Heart right ventricle (tissue), 16 donors: ENCODE measurements at regions of chr12 and their contacts with region 1.

Region 1: GRCh38 chr12:20212658-20213555 is 155.4 kb upstream of the PDE3A start:
- DNase-seq: peak; percentile 76 to 89
- ATAC-seq: peak; percentile 95 to 99 (median 98)
- H3K4me3 ChIP-seq: peak overlapping the region in 9 of 10 donors; percentile 0 to 37 (median 16)
- H3K27ac ChIP-seq: peak overlapping the region; percentile 53 to 86 (median 78)
- H3K4me1 ChIP-seq: peaks cover 5 to 48% (median 31%) of the 10 kb centered on the region in 9 donors
- H3K27me3 ChIP-seq: no peaks in the 10 kb centered on the region
- CTCF ChIP-seq: no peak

Region 2: GRCh38 chr12:19744734-19745218 is 468.1 kb before region 1 on chr12:
- intact Hi-C with region 1: loop called in 3 of 10 experiments (anchors 10 kb)
- DNase-seq: peak in 1 of 2 donors; percentile 43
- ATAC-seq: peak; percentile 73 to 93 (median 88)
- H3K4me3 ChIP-seq: no peak overlapping the region
- H3K27ac ChIP-seq: peak overlapping the region in 7 of 10 donors; percentile 31 to 61 (median 50)
- H3K4me1 ChIP-seq: peaks cover 0 to 38% (median 18%) of the 10 kb centered on the region in 9 donors
- H3K27me3 ChIP-seq: no peaks in the 10 kb centered on the region
- CTCF ChIP-seq: no peak

Region 3: GRCh38 chr12:20030826-20031225 is 182.1 kb before region 1 on chr12:
- intact Hi-C with region 1: loop called in 1 of 10 experiments (anchors 10 kb)
- DNase-seq: no peak
- ATAC-seq: no peak
- H3K4me3 ChIP-seq: no peak overlapping the region
- H3K27ac ChIP-seq: no peak overlapping the region
- H3K4me1 ChIP-seq: peaks cover 0 to 5% (median 0%) of the 10 kb centered on the region in 9 donors
- H3K27me3 ChIP-seq: no peaks in the 10 kb centered on the region
- CTCF ChIP-seq: no peak

Region 4: GRCh38 chr12:20142956-20143355 is 70.0 kb before region 1 on chr12:
- intact Hi-C with region 1: no loop called
- DNase-seq: no peak
- ATAC-seq: no peak
- H3K4me3 ChIP-seq: no peak overlapping the region
- H3K27ac ChIP-seq: no peak overlapping the region
- H3K4me1 ChIP-seq: no peaks in the 10 kb centered on the region
- H3K27me3 ChIP-seq: no peaks in the 10 kb centered on the region
- CTCF ChIP-seq: no peak

Region 5: DNA sequence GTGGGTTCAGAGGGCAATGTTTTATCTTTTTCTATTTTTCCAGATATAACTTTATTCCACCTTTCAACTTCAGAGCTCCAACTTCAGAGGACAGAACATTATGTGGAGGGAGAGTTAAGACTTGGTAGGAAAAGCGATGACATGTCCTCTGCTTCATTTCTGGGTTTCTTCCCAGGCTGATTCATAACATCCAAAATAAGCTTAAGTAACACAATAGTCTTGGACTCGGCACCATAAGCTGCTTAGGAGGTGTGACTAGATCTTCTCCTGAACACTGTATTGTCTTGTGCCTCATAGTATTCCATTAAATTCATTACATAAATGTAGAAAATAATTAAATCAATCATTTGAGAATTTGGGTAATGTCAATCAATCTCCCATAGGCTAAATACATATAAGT is 59.9 kb after region 1 on chr12:
- intact Hi-C with region 1: loop called in 2 of 10 experiments (anchors 5 kb)
- DNase-seq: no peak
- ATAC-seq: peak; percentile 59 to 87 (median 79)
- H3K4me3 ChIP-seq: no peak overlapping the region
- H3K27ac ChIP-seq: peak overlapping the region; percentile 45 to 79 (median 67)
- H3K4me1 ChIP-seq: peaks cover 0 to 50% (median 18%) of the 10 kb centered on the region in 9 donors
- H3K27me3 ChIP-seq: no peaks in the 10 kb centered on the region
- CTCF ChIP-seq: no peak

Region 6: DNA sequence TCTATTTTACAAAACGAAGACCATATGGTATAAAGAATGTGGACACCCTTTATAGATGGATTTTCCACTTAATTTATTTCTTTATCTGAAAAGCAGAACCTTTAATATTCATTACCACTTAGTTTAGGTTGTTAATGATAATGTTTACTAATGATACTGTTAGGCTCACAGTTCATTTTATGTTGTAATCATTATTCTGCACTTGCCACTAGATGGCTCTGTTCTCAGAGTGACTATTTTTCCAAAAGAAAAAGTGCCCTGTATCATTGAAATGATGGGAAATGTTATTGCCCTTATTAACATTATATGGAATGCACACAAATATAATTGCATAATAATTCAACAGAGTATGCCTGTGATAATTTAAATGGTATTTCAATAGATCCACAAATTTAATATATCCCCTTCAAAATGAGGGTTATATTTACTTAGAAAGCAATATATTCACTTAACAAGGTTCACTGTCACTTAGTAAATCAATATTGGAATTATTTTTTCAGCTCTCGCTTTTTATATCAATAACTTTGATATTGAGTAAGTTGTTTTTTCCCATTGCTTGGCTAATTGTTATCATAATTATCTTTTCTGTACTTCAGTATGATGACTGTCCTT is 251.1 kb after region 1 on chr12:
- intact Hi-C with region 1: loop called in 1 of 10 experiments (anchors 10 kb)
- DNase-seq: no peak
- ATAC-seq: no peak
- H3K4me3 ChIP-seq: no peak overlapping the region
- H3K27ac ChIP-seq: peak overlapping the region in 2 of 10 donors; percentile 42 to 67
- H3K4me1 ChIP-seq: peaks cover 0 to 72% (median 46%) of the 10 kb centered on the region in 9 donors
- H3K27me3 ChIP-seq: no peaks in the 10 kb centered on the region
- CTCF ChIP-seq: peak; percentile 11 to 71 (median 58)